ENCODE measurements at regions of chr11 and their contacts with region 1.

Region 1: GRCh38 chr11:67265633-67266423 is 445 bp upstream of the GRK2 start:
- DNase-seq: peak; percentile 45
- H3K4me3 ChIP-seq: no peak overlapping the region
- H3K27ac ChIP-seq: no peak overlapping the region
- H3K4me1 ChIP-seq: peaks cover 37% of the 10 kb centered on the region
- H3K27me3 ChIP-seq: no peaks in the 10 kb centered on the region
- CTCF ChIP-seq: peak; percentile 62 to 79
- POLR2A ChIP-seq: no peak

Region 2: DNA sequence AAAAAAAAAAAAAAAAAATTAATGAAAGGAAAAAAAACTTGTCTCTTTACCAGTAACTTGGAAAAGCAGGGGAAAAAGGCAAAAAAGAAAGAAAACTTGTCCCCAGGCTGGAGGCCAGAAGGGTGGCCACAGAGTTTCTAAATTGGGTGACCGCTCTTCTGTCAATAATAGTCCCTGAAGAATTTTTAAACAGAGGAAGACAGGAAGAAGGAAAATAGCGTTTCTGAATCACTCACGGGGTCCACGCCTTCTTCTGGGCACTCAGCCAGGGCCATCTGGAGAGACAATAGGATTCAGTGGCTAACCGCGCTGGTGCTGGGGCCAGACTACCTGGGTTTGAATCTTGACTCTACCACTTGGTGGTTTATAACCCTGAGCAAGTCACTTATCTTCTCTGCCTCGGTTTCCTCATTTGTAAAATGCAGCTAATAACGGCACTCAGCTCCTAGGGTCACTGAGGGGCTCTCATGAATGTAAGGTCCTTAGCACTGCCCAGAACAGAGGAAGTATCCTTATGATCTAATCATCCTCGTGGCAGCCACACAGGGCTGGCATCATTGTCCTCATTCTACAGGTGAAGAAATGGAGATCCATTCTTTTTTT is 283.8 kb before region 1 on chr11:
- CTCF ChIA-PET with region 1: no interaction called
- POLR2A ChIA-PET with region 1: no interaction called
- dilution Hi-C with region 1: no loop called
- intact Hi-C with region 1: no loop called
- DNase-seq: peak; percentile 93
- H3K4me3 ChIP-seq: no peak overlapping the region
- H3K27ac ChIP-seq: no peak overlapping the region
- H3K4me1 ChIP-seq: peaks cover 6% of the 10 kb centered on the region
- H3K27me3 ChIP-seq: no peaks in the 10 kb centered on the region
- CTCF ChIP-seq: no peak
- POLR2A ChIP-seq: peak; percentile 19

Region 3: DNA sequence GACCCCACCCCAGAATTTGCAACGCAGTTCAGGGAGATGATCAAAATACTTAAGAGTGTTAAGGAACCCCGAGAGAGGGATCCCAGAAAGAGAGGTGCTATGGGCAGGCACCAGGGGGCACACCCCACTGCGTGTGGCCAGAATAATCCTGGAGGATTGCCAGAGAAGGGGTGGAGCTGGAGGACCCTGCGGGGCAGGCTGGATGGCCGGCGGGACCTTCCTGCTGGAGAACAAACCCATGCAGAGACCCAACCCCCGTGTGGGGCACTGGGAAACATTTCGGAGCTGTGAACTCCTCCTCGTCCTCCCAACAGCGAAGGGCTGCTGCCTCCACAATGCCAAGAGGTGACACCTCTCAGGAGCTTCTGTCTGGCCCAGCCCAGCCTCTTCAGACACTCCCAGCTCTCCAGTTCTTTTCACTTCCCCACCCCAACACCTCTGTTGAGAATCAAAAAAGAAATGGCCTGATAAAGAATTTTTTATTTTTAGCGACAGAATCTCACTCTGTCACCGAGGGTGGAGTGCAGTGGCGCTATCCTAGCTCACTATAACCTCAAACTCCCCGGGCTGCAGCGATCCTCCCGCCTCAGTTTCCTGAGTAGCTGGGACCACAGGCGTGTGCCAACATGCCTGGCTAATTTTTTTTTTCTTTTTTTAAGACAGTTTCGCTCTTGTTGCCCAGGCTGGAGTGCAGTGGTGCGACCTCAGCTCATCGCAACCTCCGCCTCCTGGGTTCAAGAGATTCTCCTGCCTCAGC is 183.6 kb before region 1 on chr11:
- CTCF ChIA-PET with region 1: interaction called, 25 read pairs
- POLR2A ChIA-PET with region 1: no interaction called
- dilution Hi-C with region 1: no loop called
- intact Hi-C with region 1: loop called (anchors 1 kb)
- DNase-seq: peak; percentile 30
- H3K4me3 ChIP-seq: no peak overlapping the region
- H3K27ac ChIP-seq: no peak overlapping the region
- H3K4me1 ChIP-seq: no peaks in the 10 kb centered on the region
- H3K27me3 ChIP-seq: no peaks in the 10 kb centered on the region
- CTCF ChIP-seq: peak in 1 of 2 donors; percentile 18
- POLR2A ChIP-seq: no peak

Region 4: GRCh38 chr11:67252831-67253239 is 13.0 kb before region 1 on chr11:
- CTCF ChIA-PET with region 1: interaction called, 30 read pairs
- POLR2A ChIA-PET with region 1: interaction called, 3 read pairs
- dilution Hi-C with region 1: no loop called
- intact Hi-C with region 1: no loop called
- DNase-seq: peak; percentile 44
- H3K4me3 ChIP-seq: no peak overlapping the region
- H3K27ac ChIP-seq: no peak overlapping the region
- H3K4me1 ChIP-seq: no peaks in the 10 kb centered on the region
- H3K27me3 ChIP-seq: no peaks in the 10 kb centered on the region
- CTCF ChIP-seq: peak; percentile 20 to 47
- POLR2A ChIP-seq: no peak

Region 5: DNA sequence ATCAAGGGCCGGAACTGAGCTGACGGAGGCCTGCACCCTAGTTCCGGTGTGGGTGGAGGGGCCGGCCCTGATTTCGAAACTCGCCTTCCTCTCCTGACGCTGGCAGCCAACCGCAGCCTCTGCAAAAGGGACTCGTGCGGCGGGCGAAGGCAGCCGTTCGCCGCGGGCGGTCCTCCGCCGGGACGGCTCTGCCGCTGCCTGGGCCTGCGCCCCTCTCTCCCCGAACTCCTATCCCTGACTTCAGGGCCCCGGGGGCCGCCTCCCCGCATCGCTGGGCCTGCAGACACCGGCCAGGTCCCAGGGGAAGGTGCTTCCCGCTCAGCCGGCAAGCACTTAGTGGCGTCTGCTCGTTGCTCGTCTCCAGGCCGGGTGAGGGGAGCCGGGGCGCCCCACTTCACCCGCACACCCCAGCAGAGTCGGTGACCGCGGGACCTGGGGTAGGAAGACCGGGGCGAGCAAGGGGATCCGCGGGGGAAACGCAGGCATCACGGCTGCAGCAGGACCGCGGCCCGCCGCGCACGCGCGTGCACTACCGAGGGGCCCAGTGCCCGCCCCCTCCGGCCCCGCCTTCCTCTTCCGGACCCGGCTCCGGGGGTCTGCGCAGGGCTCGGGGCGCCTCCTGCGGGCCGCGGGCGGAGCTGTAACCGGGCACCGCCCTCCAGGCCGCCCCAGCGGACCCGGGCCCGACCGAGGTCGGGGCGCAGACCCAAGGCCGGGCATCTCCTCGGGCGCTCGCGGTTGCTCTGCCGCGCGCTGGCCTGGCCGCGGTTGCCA is 22.8 kb after region 1 on chr11:
- CTCF ChIA-PET with region 1: interaction called, 32 read pairs
- POLR2A ChIA-PET with region 1: no interaction called
- dilution Hi-C with region 1: no loop called
- intact Hi-C with region 1: loop called (anchors 1 kb)
- DNase-seq: peak; percentile 86
- H3K4me3 ChIP-seq: peak overlapping the region; percentile 52 to 65 (median 54)
- H3K27ac ChIP-seq: peak overlapping the region; percentile 61
- H3K4me1 ChIP-seq: peaks cover 22% of the 10 kb centered on the region
- H3K27me3 ChIP-seq: no peaks in the 10 kb centered on the region
- CTCF ChIP-seq: peak; percentile 44 to 53
- POLR2A ChIP-seq: no peak

Region 6: GRCh38 chr11:67353317-67354074 is 87.7 kb after region 1 on chr11 and contains the start of gene POLD4:
- CTCF ChIA-PET with region 1: interaction called, 20 read pairs
- POLR2A ChIA-PET with region 1: interaction called, 4 read pairs
- dilution Hi-C with region 1: no loop called
- intact Hi-C with region 1: no loop called
- DNase-seq: peak; percentile 97
- H3K4me3 ChIP-seq: peak within 1 kb of the TSS; percentile 19 to 76 (median 53)
- H3K27ac ChIP-seq: peak within 1 kb of the TSS; percentile 78
- H3K4me1 ChIP-seq: peaks cover 47% of the 10 kb centered on the region
- H3K27me3 ChIP-seq: no peaks in the 10 kb centered on the region
- CTCF ChIP-seq: no peak
- POLR2A ChIP-seq: peak; percentile 95
- total RNA-seq, gene POLD4: 50.1 and 66.9 TPM in 2 replicates

Measured in endothelial cell of umbilical vein (primary cell).